Head of caudate nucleus (tissue), 42 donors: ENCODE measurements at regions of chr11 and their contacts with region 1.

Region 1: DNA sequence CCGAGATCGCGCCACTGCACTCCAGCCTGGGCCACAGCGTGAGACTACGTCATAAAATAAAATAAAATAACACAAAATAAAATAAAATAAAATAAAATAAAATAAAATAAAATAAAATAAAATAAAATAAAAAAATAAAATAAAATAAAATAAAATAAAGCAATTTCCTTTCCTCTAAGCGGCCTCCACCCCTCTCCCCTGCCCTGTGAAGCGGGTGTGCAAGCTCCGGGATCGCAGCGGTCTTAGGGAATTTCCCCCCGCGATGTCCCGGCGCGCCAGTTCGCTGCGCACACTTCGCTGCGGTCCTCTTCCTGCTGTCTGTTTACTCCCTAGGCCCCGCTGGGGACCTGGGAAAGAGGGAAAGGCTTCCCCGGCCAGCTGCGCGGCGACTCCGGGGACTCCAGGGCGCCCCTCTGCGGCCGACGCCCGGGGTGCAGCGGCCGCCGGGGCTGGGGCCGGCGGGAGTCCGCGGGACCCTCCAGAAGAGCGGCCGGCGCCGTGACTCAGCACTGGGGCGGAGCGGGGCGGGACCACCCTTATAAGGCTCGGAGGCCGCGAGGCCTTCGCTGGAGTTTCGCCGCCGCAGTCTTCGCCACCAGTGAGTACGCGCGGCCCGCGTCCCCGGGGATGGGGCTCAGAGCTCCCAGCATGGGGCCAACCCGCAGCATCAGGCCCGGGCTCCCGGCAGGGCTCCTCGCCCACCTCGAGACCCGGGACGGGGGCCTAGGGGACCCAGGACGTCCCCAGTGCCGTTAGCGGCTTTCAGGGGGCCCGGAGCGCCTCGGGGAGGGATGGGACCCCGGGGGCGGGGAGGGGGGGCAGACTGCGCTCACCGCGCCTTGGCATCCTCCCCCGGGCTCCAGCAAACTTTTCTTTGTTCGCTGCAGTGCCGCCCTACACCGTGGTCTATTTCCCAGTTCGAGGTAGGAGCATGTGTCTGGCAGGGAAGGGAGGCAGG is at the start of gene GSTP1:
- DNase-seq: peak; percentile 73 to 96 (median 91)

Region 2: DNA sequence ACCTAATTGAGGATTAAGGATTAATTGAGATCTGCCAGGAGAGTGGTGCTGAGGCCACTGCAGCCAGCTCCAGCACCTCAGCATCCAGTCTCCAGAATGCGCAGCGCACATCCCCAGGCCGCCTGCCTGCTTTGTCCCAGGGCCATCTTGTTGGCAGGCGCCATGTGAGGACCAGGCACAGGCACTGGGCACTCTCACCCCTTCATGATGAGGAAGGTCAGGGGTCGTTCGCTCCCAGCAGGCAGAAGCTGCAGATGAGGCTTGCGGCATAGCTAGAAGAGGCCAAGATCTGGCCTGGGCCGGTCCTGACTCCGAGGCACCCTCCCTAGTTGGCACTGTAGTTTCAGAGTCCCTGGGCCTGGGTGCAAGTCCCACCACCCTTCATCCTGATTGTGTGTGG is 66.7 kb before region 1 on chr11:
- intact Hi-C with region 1: loop called (anchors 10 kb)
- DNase-seq: no peak

Region 3: DNA sequence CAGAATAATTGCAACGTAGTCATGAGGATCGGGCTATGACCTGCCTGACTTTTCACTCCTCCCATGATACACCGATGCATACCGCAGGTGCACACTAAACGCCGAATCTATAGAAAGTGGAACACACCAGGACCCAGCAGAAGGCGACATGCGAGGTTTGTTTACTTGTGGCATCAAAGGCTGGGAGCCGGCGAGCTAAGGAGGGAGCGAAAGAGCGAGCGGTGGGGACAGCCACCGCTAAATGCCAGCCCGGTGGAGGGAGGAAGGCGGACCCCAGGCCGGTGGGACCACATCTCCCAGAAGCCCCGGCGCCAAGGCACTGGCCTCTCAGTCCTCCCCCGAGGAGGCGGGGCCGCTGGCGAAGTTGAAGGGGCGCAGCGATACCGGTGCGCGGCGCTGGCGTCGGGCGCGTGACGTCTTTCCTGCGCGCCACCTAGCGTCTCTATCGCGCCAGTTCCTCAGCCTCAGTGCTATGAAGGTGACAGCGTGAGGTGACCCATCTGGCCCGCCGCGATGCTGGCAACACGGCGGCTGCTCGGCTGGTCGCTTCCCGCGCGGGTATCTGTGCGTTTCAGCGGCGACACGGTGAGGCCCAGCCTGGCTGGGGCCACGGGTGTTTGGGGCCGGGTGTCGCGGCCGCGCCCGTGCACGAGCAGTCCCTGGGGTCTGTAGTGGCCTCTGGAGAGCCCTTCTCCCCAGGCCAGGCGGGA is 23.1 kb after region 1 on chr11 and contains the start of gene NDUFV1:
- intact Hi-C with region 1: loop called (anchors 2 kb)
- DNase-seq: peak; percentile 94 to 100 (median 98)

Region 4: DNA sequence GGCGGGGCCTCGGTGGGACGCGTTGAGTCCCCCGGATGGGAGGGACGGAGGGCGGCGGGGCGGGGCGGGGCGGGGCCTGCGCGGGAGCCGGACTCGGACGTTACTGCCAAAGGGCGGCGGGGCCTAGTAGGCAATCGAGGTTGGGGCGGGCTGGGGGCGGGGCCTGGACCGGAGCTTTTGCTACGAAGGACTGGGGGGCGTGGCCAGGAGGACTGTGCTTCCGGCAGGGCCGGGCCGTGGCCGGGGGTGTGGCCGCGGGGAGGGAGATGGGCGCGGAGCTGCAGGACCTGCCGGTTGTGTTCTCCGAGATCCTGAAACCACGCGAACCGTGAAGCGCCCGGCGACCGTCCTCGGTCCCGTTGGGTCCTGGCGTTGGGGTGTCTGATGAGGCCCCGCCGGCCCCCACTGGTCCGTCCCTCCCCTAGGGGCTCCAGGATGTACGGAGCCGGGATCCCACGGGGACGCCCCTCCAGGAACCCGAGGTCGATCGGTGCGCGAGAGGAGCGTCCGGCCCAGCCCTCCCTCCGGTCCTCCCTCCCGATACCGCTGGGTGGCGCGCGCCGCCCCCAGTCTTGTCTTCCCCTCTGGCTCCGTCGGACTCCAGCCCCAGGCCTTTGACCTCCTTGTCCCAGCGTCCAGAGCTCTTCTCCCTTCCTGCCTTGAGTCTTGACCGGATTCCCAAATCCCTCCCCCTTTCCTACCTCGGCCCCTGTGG is 46.9 kb after region 1 on chr11:
- intact Hi-C with region 1: no loop called
- DNase-seq: peak; percentile 89 to 99 (median 96)